Activated B cell treated with CpG ODN at 0.5 μM for 24 hours (primary cell): ENCODE measurements at regions of chr22 and their contacts with region 1.

Region 1: GRCh38 chr22:38705235-38706100 is at the start of gene GTPBP1:
- DNase-seq: peak; percentile 82
- ATAC-seq: peak; percentile 79
- H3K4me3 Mint-ChIP-seq: peak within 1 kb of the TSS; percentile 88
- H3K27ac Mint-ChIP-seq: peak within 1 kb of the TSS; percentile 85
- H3K4me1 Mint-ChIP-seq: peaks cover 69% of the 10 kb centered on the region
- H3K27me3 Mint-ChIP-seq: no peaks in the 10 kb centered on the region
- CTCF ChIP-seq: no peak
- total RNA-seq, gene GTPBP1: 90.6 and 103 TPM in 2 replicates

Region 2: DNA sequence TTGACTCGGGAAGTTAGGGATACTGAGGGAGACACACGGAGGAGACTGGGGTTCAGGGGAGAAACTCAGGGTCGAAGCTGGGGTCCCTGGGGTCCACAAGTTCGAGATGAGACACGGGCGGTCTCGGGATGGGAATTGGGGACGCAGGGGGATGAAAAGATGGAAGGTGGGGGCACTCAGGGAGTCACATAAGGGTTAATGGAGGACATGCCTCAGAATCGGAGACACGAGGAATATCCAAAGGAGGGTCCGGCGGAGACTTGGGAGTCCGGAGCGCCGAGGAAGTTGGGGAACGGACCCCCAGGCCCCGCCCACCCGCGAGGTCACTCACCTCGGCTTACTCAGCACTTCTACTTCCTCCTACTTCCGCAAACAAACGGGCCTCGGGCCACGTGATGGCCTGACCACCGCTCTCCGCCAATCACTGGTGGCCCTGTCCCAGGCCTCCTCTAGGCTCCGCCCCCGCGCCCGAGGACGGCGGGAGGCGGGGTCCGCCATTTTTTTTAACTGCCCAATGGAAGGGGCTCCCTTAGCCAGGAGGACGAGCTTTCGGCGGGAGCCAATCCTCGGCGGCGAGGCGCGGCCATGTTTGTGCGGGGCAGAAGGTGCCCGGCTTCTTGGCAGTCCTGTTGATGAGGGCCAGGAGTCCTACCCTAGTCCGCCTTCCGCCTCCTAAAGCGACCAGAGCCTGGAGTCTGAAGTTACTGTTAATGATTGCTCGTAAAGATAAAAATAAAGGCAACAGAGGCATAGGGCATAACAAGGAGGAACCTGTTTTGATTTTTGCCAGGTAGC is 523.8 kb before region 1 on chr22 and contains the start of gene PLA2G6:
- CTCF ChIA-PET with region 1: no interaction called
- POLR2A ChIA-PET with region 1: no interaction called
- intact Hi-C with region 1: loop called (anchors 2 kb)
- DNase-seq: peak; percentile 97
- ATAC-seq: peak; percentile 97
- H3K4me3 Mint-ChIP-seq: peak within 1 kb of the TSS; percentile 92
- H3K27ac Mint-ChIP-seq: peak within 1 kb of the TSS; percentile 85
- H3K4me1 Mint-ChIP-seq: peaks cover 43% of the 10 kb centered on the region
- H3K27me3 Mint-ChIP-seq: peaks cover 4% of the 10 kb centered on the region
- CTCF ChIP-seq: no peak
- total RNA-seq, gene PLA2G6: 53.0 and 64.0 TPM in 2 replicates

Region 3: DNA sequence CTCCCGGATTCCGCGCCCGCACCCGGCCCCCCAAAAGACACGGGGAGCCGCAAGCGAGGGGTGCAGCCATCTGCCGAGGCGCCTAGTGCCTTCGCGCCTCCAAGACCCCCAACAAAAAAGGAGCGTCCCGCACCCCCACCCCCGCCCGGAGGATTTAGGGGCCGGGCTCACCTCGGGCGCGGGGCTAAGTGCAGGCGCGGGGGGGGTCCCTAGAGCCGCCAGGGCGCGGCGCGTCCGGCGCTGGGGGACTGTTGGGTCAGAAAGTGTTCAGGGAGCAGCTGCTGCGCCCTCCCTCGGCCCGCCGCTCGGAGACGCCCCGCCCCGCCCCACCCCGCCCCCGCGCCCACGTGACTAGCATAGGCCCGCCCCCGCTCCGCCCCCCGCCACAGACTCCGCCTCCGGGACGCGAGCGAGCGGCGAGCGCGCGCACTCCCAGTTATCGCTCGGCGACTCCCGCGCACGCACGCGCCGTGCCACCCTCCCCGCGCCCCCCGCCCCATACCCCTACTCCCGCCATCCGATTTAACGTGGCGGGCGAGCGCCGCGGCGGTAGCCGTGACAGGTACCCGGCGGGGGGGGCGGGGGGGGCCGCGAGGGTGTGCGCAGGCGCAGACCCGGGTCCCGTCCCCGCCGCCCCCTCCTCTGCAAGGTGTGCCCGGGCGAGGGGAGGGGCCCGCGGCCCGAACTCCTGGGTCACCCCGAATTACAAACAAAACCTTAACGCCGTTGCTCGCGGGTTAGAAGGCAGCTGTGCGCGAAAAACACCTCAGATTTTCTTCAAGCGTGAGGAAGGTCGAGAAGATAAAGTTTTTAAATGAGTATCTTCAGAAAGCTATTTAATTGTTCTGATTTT is 306.6 kb before region 1 on chr22:
- CTCF ChIA-PET with region 1: no interaction called
- POLR2A ChIA-PET with region 1: interaction called, 3 read pairs
- intact Hi-C with region 1: loop called (anchors 5 kb)
- DNase-seq: peak; percentile 79
- ATAC-seq: peak; percentile 73
- H3K4me3 Mint-ChIP-seq: peak overlapping the region; percentile 82
- H3K27ac Mint-ChIP-seq: peak overlapping the region; percentile 84
- H3K4me1 Mint-ChIP-seq: peaks cover 37% of the 10 kb centered on the region
- H3K27me3 Mint-ChIP-seq: no peaks in the 10 kb centered on the region
- CTCF ChIP-seq: no peak

Region 4: DNA sequence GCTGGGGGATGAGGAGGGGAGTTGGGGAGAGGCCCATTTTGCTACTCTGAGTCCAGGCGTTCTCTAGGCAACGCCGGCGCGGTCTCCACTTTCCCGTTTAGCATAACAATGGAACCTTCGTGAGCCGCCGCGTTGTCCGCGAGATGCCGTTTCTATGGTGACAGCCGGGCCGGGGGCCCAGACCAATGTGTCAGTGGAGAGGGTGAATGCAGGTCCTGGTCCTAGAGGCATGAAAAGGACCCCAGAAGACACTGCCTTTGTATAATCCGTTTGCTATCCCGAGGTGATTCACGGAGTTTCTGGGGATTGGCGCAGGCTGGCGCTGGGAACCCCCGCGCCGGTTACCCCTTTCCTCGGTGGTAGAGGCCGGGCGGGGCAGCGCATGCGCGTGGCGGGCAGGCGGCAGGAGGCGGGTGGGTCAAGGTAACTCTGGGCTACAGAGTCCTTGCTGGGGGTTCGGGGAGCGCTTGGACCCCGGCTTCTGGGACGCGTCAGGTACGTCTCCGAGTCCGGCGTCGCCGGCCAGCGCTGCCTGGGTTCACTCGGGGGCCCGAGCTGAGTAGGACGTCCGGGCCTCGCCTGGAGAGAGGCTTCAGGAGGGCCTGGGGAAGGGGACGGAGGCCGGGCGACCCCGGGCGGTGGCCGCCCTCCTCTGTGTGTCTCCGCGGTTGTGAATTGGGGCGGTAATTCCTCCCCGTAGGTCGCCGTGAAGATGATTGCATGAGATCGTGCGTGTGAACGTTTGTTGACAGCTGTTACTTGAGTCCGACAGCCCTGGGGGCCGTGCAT is 49.0 kb before region 1 on chr22 and contains the starts of genes CBY1 and FAM227A:
- CTCF ChIA-PET with region 1: no interaction called
- POLR2A ChIA-PET with region 1: no interaction called
- intact Hi-C with region 1: loop called (anchors 2 kb)
- DNase-seq: peak; percentile 91
- ATAC-seq: peak; percentile 84
- H3K4me3 Mint-ChIP-seq: peak within 1 kb of the TSS; percentile 94
- H3K27ac Mint-ChIP-seq: peak within 1 kb of the TSS; percentile 99
- H3K4me1 Mint-ChIP-seq: peaks cover 10% of the 10 kb centered on the region
- H3K27me3 Mint-ChIP-seq: no peaks in the 10 kb centered on the region
- CTCF ChIP-seq: no peak
- total RNA-seq, gene CBY1: 7.3 and 14.1 TPM in 2 replicates
- total RNA-seq, gene FAM227A: 0.20 and 0.66 TPM in 2 replicates

Region 5: GRCh38 chr22:38755911-38756532 is 50.6 kb after region 1 on chr22 and contains the start of gene SUN2:
- CTCF ChIA-PET with region 1: no interaction called
- POLR2A ChIA-PET with region 1: interaction called, 16 read pairs
- intact Hi-C with region 1: loop called (anchors 1 kb)
- DNase-seq: peak; percentile 92
- ATAC-seq: peak; percentile 75
- H3K4me3 Mint-ChIP-seq: peak within 1 kb of the TSS; percentile 92
- H3K27ac Mint-ChIP-seq: peak within 1 kb of the TSS; percentile 99
- H3K4me1 Mint-ChIP-seq: peaks cover 71% of the 10 kb centered on the region
- H3K27me3 Mint-ChIP-seq: no peaks in the 10 kb centered on the region
- CTCF ChIP-seq: no peak
- total RNA-seq, gene SUN2: 122 and 146 TPM in 2 replicates

Region 6: GRCh38 chr22:39029227-39029626 is 323.8 kb after region 1 on chr22:
- CTCF ChIA-PET with region 1: no interaction called
- POLR2A ChIA-PET with region 1: no interaction called
- intact Hi-C with region 1: no loop called
- DNase-seq: no peak
- ATAC-seq: no peak
- H3K4me3 Mint-ChIP-seq: no peak overlapping the region
- H3K27ac Mint-ChIP-seq: peak overlapping the region; percentile 56
- H3K4me1 Mint-ChIP-seq: peaks cover 15% of the 10 kb centered on the region
- H3K27me3 Mint-ChIP-seq: no peaks in the 10 kb centered on the region
- CTCF ChIP-seq: no peak

Region 7: DNA sequence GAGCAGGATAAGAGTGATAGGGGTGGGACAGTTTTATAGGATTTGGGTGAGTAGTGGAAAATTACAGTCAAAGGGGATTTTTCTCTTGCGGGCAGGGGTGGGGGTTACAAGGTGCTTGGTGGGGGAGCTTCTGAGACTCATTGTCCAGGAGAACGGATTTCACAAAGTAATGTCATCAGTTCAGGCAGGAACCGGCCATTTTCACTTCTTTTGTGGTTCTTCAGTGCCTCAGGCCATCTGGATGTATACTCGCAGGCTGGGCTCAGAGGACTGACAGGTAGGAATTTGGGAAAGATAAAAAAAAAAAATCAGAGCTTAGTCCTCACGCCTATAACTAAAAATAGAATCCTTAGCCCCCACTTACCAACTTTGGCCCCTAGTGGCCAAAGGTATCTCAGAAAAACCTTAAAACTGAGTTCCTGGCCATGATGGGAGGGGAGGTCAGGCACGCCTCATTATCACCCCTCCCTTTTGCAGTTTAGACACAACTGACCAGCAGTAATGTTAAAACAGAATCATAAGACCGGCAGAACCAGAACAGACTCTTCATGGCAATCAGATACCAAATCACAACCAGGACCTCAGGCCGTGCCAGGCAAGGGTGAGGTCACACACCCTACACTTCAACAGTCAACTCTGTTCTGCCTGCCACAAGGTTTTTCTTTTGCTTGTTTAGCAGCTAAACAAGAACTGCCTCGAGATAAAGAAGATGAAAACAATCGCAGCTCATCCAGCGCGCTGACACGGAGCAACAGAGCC is 362.7 kb after region 1 on chr22:
- CTCF ChIA-PET with region 1: no interaction called
- POLR2A ChIA-PET with region 1: no interaction called
- intact Hi-C with region 1: loop called (anchors 2 kb)
- DNase-seq: no peak
- ATAC-seq: no peak
- H3K4me3 Mint-ChIP-seq: no peak overlapping the region
- H3K27ac Mint-ChIP-seq: no peak overlapping the region
- H3K4me1 Mint-ChIP-seq: peaks cover 54% of the 10 kb centered on the region
- H3K27me3 Mint-ChIP-seq: no peaks in the 10 kb centered on the region
- CTCF ChIP-seq: no peak